Activated naive CD4-positive, alpha-beta T cell treated with anti-CD3 and anti-CD28 coated beads for 36 hours (primary cell): ENCODE measurements at regions of chr14 and their contacts with region 1.

Region 1: DNA sequence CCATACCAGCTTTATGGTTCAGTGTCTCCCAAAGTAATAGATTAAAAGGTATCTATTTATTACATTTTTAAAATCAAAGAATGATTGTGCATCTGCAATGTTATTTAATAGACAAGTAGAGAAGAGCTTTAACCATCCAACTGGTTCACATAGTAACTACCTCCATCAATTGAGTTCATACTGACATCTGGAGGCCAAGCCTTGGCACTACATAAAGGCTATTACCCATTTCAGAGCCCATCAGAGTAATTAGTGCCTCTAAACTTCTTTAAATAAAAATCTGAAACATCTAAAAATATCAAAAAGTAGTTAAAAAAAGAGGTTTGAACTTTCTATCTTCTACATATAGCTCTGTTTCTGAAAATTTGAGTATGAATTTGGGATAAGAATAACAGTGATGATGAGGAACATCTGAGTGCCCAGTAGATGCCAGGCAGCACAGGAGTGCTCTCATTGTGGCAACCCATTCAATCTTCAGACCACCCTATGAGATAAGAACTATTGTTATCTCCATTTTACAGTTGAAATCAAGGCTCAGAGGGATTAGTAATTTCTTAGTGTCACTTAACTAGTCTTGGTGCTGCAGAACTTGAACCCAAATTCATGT is 132.9 kb upstream of the DAAM1 start:
- DNase-seq: peak; percentile 54
- H3K4me3 Mint-ChIP-seq: no peak overlapping the region
- H3K27ac Mint-ChIP-seq: no peak overlapping the region
- H3K4me1 Mint-ChIP-seq: no peaks in the 10 kb centered on the region
- H3K27me3 Mint-ChIP-seq: peaks cover 4% of the 10 kb centered on the region

Region 2: GRCh38 chr14:59028476-59029202 is 26.9 kb before region 1 on chr14:
- CTCF ChIA-PET with region 1: interaction called, 3 read pairs
- intact Hi-C with region 1: loop called (anchors 1 kb)
- DNase-seq: peak; percentile 62
- H3K4me3 Mint-ChIP-seq: no peak overlapping the region
- H3K27ac Mint-ChIP-seq: no peak overlapping the region
- H3K4me1 Mint-ChIP-seq: peaks cover 4% of the 10 kb centered on the region
- H3K27me3 Mint-ChIP-seq: no peaks in the 10 kb centered on the region

Region 3: DNA sequence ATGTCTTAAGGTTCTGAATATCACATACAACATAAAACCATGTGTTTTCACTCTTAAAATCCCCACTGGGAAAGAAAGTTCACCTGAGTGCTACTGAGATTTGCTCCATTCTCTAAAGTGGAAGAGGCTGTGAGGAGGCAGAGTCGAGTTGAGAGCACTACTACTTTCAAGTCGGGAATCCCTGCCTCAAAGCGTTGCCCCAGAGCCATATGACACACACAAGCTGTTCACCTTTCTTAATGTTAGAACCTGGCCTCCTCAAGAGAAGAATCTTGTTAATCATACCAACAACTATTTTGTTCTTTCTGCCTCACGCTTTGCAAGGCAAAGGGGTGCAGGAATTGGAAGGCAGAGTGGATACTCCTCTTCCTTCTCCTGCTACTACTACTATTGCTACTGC is 16.8 kb before region 1 on chr14:
- CTCF ChIA-PET with region 1: no interaction called
- intact Hi-C with region 1: no loop called
- DNase-seq: no peak
- H3K4me3 Mint-ChIP-seq: no peak overlapping the region
- H3K27ac Mint-ChIP-seq: no peak overlapping the region
- H3K4me1 Mint-ChIP-seq: no peaks in the 10 kb centered on the region
- H3K27me3 Mint-ChIP-seq: peaks cover 2% of the 10 kb centered on the region

Region 4: GRCh38 chr14:59107819-59108428 is 52.4 kb after region 1 on chr14:
- CTCF ChIA-PET with region 1: no interaction called
- intact Hi-C with region 1: no loop called
- DNase-seq: no peak
- H3K4me3 Mint-ChIP-seq: no peak overlapping the region
- H3K27ac Mint-ChIP-seq: no peak overlapping the region
- H3K4me1 Mint-ChIP-seq: no peaks in the 10 kb centered on the region
- H3K27me3 Mint-ChIP-seq: peaks cover 13% of the 10 kb centered on the region